H1 (cell line): ENCODE measurements at regions of chr9 and their contacts with region 1.

Region 1: DNA sequence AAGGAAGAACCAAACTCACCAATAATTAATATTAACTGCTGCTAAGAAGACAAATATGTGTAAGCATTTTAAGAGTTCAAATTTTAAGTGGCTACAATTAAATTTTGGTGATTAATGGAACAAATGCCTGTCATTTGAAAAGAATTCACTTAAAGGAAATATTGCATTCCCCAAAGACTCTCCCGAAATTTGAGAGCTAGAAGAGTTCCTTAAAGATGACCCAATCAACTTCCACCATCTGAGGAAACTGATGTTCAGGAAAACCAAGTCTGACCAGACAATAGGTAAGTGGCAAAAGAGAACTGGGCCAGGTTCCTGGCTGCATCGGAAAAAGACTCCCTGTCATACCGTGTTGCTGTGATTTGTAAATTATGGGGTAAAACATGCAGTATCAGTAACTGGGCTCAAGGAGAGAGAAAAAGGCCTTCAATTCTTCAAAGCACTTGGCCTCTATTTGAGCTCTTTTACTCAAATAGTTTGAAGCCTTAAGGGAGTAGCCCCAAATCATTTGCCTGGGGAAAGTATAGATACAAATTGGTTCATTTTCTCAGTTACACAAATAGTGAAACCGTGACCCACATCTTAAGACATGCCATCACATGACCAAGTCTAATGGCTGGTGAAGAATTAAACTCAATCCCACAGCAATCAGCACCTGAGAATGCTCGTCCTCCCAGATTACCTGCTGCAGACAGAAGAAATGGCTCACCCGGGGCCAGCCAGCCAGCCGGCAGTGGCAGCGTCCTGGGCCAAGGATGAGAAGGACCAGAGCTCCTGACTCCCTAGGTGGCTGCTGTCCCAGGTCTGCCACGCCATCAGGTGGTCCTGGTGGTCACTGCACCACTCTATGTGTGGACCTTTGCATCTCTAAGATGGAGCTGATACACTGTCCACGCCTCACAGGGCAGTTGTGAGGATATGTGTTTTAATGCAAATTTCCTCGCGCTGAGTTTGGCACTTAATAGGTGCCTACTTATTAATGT is 162.9 kb downstream of the TTLL11 start:
- DNase-seq: peak in 1 of 2 experiments; percentile 63
- H3K4me3 ChIP-seq: no peak overlapping the region
- H3K27ac ChIP-seq: no peak overlapping the region
- H3K4me1 ChIP-seq: peaks cover 0 to 2% (median 0%) of the 10 kb centered on the region in 4 experiments; a peak in 3 of 7 replicates
- H3K27me3 ChIP-seq: no peaks in the 10 kb centered on the region; a peak in 2 of 7 replicates
- CTCF ChIP-seq: peak; percentile 81 to 88 (median 86)
- EP300 ChIP-seq: no peak
- POLR2A ChIP-seq: no peak
- RAD21 ChIP-seq: peak; percentile 91 to 95

Region 2: DNA sequence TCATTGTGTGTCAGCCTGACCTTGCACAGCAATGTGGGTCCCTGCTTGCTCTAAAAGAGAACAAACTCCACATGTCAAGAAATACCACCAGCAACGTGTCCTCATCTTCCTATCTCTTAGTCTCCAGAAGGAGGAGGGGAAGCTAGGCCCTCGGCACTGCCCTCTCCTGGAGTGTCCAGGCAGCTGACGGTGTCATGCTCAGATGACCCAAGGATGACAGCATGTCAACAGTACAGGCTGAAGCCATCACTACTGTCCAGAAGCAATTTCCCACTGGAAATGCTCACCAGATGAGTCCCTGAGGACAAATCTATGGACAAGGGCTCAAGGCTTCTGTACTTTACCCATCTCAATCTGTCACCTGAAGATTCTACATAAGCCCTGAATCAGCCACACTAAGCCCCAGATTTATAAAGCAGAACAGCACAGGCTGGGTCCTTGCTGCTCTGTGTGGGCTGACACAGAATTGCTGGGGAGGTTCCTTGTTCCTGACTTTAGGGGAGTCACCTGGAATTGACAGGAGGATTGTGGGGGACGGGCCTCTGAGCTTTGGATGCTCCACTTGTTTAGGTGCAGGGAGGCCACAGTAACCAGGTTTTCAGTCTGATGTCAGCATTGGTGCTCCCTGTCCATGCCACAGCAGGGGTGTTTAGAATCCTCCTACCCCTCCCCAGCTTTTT is 68.5 kb before region 1 on chr9:
- CTCF ChIA-PET with region 1: interaction called, 21 read pairs
- POLR2A ChIA-PET with region 1: no interaction called
- DNase-seq: peak in 1 of 2 experiments; percentile 57
- H3K4me3 ChIP-seq: no peak overlapping the region
- H3K27ac ChIP-seq: no peak overlapping the region
- H3K4me1 ChIP-seq: peaks cover 0 to 8% (median 2%) of the 10 kb centered on the region in 4 experiments; a peak in 6 of 7 replicates
- H3K27me3 ChIP-seq: no peaks in the 10 kb centered on the region
- CTCF ChIP-seq: peak; percentile 81 to 91 (median 91)
- EP300 ChIP-seq: no peak
- POLR2A ChIP-seq: no peak
- RAD21 ChIP-seq: peak; percentile 64 to 77

Region 3: DNA sequence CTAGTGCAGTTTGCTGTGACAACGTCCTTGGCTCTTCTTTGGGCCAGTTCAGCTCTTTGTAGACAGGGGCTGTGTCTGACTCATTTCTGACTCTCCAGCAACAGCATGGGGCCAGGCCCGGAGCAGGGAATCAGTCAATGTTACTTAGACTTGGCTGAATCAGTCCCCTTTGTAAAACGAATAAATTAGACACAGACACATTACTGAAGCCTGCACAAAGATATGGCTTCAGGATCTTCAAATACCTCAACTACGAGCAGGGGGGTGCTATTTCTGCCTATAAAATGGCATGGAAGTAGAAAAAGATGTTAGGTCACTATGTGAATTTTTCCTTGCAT is 41.8 kb before region 1 on chr9:
- CTCF ChIA-PET with region 1: interaction called, 10 read pairs
- POLR2A ChIA-PET with region 1: no interaction called
- DNase-seq: no peak
- H3K4me3 ChIP-seq: no peak overlapping the region
- H3K27ac ChIP-seq: no peak overlapping the region
- H3K4me1 ChIP-seq: peaks cover 5 to 19% (median 15%) of the 10 kb centered on the region in 4 experiments; a peak in 5 of 7 replicates
- H3K27me3 ChIP-seq: no peaks in the 10 kb centered on the region; a peak in 1 of 7 replicates
- CTCF ChIP-seq: no peak
- EP300 ChIP-seq: no peak
- POLR2A ChIP-seq: no peak
- RAD21 ChIP-seq: no peak

Region 4: DNA sequence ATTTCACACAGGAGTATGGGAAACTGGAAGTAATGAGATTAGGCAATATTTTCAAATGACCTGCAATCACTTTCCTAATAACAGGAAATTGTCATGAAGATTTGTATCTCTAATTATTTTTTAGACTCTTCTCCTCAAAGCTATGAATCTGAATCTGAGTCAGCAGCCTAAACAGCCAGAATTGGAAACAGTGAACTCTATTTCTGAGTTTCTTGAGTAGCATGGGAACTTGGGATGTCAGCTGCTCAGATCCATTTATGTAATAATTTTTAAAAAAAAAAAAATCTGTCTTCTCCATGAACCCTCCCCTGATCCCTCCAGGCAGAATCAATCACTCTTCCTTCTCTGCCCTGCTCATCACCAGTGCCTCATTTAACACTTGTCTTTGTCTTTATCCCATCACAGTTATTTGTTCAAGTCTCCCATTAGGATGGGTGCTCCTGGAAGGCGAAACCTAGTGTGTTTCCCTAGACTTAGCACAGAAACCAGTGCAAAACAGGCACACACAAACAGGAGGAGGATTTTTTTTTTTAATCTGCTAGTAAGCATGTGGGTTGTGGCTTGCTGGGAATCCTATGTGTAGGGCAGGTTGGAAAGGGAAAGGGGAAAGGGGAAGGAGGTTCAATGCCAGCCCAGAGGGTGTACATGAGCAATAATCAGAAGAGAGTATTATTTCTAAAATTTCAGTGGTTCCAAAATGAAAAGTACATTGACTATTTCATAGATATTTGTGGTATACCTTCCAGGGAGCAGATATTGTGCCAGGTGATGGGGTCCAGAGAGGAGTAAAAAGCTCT is 23.9 kb before region 1 on chr9:
- CTCF ChIA-PET with region 1: interaction called, 10 read pairs
- POLR2A ChIA-PET with region 1: no interaction called
- DNase-seq: no peak
- H3K4me3 ChIP-seq: no peak overlapping the region
- H3K27ac ChIP-seq: no peak overlapping the region
- H3K4me1 ChIP-seq: no peaks in the 10 kb centered on the region
- H3K27me3 ChIP-seq: no peaks in the 10 kb centered on the region
- CTCF ChIP-seq: no peak
- EP300 ChIP-seq: no peak
- POLR2A ChIP-seq: no peak
- RAD21 ChIP-seq: no peak

Region 5: GRCh38 chr9:121947775-121948174 is 17.6 kb after region 1 on chr9:
- CTCF ChIA-PET with region 1: interaction called, 12 read pairs
- POLR2A ChIA-PET with region 1: no interaction called
- DNase-seq: no peak
- H3K4me3 ChIP-seq: no peak overlapping the region
- H3K27ac ChIP-seq: no peak overlapping the region
- H3K4me1 ChIP-seq: peaks cover 1 to 8% (median 5%) of the 10 kb centered on the region in 4 experiments; a peak in 5 of 7 replicates
- H3K27me3 ChIP-seq: no peaks in the 10 kb centered on the region
- CTCF ChIP-seq: no peak
- EP300 ChIP-seq: no peak
- POLR2A ChIP-seq: no peak
- RAD21 ChIP-seq: no peak

Region 6: DNA sequence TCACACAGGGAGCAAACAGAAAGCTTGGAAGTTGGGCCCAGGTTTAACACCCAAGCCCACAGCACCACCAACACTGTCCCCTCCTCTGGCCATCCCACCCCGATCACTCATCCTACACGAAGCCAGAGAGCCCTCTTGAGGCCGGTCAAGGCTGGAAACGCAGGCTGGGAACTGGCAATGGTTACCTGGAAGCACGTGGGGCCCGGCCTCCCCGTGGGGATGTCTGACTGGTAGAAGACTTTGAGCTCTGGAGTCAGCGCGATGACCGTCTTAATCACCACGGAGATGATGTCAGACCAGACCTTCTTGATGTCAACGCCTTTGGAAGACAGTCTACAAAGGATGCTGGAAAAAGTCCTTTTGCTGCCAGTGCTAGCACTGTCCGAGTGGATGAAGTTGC is 58.8 kb after region 1 on chr9:
- CTCF ChIA-PET with region 1: interaction called, 14 read pairs
- POLR2A ChIA-PET with region 1: no interaction called
- DNase-seq: peak; percentile 33 to 75
- H3K4me3 ChIP-seq: no peak overlapping the region
- H3K27ac ChIP-seq: no peak overlapping the region
- H3K4me1 ChIP-seq: no peaks in the 10 kb centered on the region
- H3K27me3 ChIP-seq: no peaks in the 10 kb centered on the region; a peak in 2 of 7 replicates
- CTCF ChIP-seq: peak; percentile 73 to 84 (median 80)
- EP300 ChIP-seq: no peak
- POLR2A ChIP-seq: no peak
- RAD21 ChIP-seq: peak; percentile 86 to 91

Region 7: DNA sequence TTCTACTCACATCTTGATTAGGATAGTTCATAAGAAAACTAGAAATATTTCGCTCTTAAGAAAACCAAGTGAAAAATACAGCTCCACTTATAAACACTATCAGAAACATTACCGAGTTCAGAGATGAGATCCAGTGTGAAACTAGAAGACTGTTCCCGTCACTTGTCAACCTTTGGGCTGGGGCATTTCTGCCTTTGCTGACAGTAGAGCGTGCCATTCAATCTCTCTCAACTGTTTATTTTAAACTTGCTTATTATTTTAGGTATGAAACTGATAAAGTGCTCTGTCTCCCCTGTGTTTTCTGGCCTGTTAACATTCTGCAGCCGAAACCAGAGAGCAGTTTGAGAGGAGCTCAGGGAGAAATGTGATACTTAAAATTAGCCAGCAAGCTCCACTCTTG is 351.2 kb after region 1 on chr9:
- CTCF ChIA-PET with region 1: no interaction called
- POLR2A ChIA-PET with region 1: no interaction called
- DNase-seq: no peak
- H3K4me3 ChIP-seq: no peak overlapping the region
- H3K27ac ChIP-seq: no peak overlapping the region
- H3K4me1 ChIP-seq: peaks cover 0 to 2% (median under 1%) of the 10 kb centered on the region in 4 experiments; a peak in 3 of 7 replicates
- H3K27me3 ChIP-seq: no peaks in the 10 kb centered on the region
- CTCF ChIP-seq: no peak
- EP300 ChIP-seq: no peak
- POLR2A ChIP-seq: no peak
- RAD21 ChIP-seq: no peak